Activated T-helper 2 cell treated with anti-CD3 and anti-CD28 coated beads, Interferon-gamma antibody, Interleukin-2, Interleukin-4, amounts not matched to agents 10 μg/mL and 5 μg/mL and 100 μg/mL, durations not matched to agents 14 hours and 24 hours and 36 hours (primary cell): ENCODE measurements at regions of chr3 and their contacts with region 1.

Region 1: DNA sequence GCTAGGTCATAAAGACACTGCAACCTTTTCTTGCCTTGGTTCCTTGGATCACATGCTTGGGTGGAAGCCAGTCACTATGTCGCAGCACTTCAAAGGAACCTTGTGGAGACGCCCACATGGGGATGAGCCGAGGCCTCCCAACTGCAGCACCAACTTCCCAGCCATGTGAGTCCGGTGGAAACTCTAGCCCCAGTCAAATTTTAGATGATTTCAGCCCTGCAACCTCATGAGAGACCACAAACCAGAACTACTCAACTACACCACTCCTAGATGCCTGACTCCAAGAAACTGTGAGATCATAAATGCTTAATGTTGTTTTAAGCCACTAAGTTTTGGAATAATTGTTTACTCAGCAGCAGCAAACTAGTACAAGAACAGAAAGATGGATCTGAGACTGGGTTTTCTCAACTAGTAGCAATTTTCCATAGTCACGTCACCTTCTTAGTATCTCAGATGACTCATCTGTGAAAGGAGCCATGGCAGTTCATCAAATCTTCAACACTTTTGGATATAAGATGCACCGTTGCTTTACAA is 86.5 kb downstream of the MB21D2 start:
- DNase-seq: no peak
- H3K4me3 Mint-ChIP-seq: no peak overlapping the region
- H3K27ac Mint-ChIP-seq: peak overlapping the region; percentile 77
- H3K4me1 Mint-ChIP-seq: peaks cover 38% of the 10 kb centered on the region
- H3K27me3 Mint-ChIP-seq: no peaks in the 10 kb centered on the region

Region 2: DNA sequence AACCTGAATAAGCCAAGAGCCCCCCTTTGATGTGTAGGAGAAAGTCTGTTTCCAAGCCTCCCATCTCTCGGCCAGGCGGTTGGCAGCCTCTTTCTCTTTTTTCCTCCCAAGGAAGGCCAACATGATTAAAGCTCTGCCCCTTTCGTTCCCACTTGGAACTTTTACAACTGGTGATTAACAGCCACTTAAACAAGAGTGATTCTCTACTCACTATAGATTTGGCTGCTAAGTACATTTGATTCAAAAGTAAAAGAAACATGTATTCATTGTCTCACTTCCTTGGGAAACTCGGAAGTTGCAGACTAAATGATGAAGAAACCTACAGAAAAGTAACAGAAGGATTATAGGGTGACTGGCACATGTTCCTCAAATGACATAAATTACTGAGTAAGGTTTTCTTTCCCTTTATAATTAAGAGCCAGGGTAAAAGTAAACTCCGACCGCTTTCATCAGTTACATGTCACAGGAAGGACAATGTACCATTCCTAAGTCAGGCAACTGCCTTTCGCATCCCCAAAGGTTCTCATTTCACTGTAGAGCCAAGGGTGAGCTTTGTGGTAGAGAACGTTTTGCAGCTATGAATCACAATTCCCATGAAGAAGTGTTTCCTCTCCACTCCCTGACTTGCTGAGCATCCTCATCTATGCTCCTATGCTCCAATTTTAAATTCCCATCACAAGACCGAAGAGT is 13.8 kb after region 1 on chr3:
- intact Hi-C with region 1: loop called (anchors 1 kb)
- DNase-seq: no peak
- H3K4me3 Mint-ChIP-seq: no peak overlapping the region
- H3K27ac Mint-ChIP-seq: peak overlapping the region; percentile 4
- H3K4me1 Mint-ChIP-seq: peaks cover 34% of the 10 kb centered on the region
- H3K27me3 Mint-ChIP-seq: no peaks in the 10 kb centered on the region

Region 3: GRCh38 chr3:192892981-192893700 is 62.0 kb after region 1 on chr3:
- intact Hi-C with region 1: loop called (anchors 1 kb)
- DNase-seq: peak; percentile 77
- H3K4me3 Mint-ChIP-seq: peak overlapping the region; percentile 34
- H3K27ac Mint-ChIP-seq: peak overlapping the region; percentile 82
- H3K4me1 Mint-ChIP-seq: peaks cover 79% of the 10 kb centered on the region
- H3K27me3 Mint-ChIP-seq: peaks cover 10% of the 10 kb centered on the region

Region 4: DNA sequence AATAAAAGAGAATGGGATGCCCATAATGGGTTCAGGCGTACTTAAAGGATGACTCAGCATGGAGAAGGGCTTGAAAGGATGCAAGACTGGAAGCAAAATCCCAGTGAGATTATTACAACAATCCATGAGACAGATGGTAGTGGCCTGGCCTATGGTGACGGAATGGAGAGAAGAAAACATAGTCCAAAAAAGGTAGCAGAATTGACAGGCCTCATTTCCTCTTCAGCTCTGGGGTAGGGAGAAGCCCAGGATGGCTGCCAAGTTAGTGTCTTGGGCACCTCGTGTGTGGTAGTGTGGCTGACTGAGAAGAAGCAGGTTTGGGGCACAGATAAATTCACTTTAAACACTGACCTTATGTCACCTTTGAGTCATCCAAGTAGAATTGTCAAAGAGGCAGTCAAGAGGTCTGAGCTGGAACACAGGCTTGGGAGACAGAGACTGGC is 68.4 kb after region 1 on chr3:
- intact Hi-C with region 1: loop called (anchors 1 kb)
- DNase-seq: no peak
- H3K4me3 Mint-ChIP-seq: no peak overlapping the region
- H3K27ac Mint-ChIP-seq: peak overlapping the region; percentile 79
- H3K4me1 Mint-ChIP-seq: peaks cover 55% of the 10 kb centered on the region
- H3K27me3 Mint-ChIP-seq: peaks cover 12% of the 10 kb centered on the region

Region 5: GRCh38 chr3:193592944-193593667 is 761.9 kb after region 1 on chr3 and contains the start of gene OPA1:
- intact Hi-C with region 1: loop called (anchors 5 kb)
- DNase-seq: peak; percentile 90
- H3K4me3 Mint-ChIP-seq: peak within 1 kb of the TSS; percentile 99
- H3K27ac Mint-ChIP-seq: peak within 1 kb of the TSS; percentile 100
- H3K4me1 Mint-ChIP-seq: peaks cover 37% of the 10 kb centered on the region
- H3K27me3 Mint-ChIP-seq: no peaks in the 10 kb centered on the region
- total RNA-seq, gene OPA1: 105 and 118 TPM in 2 replicates